HEK293 (cell line): ENCODE measurements at regions of chr6 and their contacts with region 1.

Region 1: DNA sequence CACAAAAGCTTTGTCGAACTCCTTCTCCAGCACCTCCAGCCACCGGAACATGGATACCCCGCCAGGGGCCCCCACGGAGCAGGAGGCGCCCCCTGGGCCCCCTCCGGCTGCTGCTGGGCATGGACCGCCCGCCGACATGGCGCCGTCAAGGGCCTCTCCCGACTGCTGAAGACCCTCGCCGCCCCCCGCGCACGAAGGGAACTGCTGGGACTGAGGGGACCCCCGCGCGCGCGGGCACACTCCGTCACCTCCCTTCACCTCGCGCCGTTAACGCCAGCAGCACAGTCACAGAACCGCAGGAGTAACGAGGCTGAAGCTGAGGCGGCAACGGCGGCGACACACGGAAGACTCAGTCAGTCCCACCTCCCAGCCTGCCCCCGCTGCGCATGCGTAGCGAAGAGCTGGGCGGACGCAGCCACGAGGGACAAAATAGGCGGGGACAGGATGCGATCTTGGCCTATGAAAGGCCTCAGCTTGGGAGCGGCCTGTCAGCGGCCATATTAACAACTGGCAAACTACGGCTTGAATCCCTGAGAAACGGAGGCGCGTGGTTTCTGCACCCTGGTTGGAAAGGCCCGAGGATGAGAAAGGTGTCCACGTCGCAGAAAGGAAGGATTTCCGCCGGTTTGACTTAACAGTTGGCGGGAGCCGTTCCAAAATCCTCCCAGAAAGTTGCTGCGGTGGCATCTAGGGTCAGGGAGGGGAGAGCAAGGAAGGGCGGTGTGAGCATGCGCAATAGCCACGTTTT is at the start of gene GOPC:
- H3K4me3 ChIP-seq: peak within 1 kb of the TSS; percentile 82
- H3K27ac ChIP-seq: peak within 1 kb of the TSS; percentile 75
- H3K4me1 ChIP-seq: no peaks in the 10 kb centered on the region
- CTCF ChIP-seq: peak; percentile 96

Region 2: DNA sequence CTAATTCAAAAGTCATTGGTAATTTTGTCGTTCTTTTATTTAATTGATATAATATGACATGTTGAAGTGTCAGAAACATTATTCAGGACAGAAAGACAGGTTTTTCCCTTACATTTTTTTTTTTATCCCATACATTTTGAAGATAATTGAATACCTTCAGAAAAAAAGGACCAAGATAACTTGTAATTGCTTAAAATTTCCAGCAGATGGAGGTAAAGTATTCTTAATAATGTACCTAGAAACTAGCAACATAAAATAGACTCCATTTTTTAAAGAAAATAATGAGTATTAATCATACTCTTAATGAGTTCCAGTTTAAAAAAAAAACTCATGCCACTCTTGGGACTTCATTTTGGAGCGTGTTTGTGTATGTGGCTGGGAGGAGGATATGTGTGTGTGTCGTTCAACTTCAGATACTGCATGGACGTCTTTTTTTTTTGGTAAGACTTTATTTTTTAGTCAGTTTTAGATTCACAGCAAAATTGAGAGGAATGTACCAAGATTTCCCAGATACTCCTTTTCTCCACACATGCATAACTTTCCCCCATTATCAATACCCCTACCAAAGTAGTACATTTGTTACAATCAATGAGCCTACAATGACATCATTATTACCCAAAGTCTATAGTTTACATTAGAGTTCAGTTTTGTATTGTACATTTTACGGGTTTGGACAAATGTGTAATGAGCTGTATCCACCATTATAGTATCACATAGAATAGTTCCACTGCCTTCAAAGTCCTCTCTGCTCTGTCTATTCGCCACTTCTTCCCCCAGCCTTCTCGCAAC is 256.0 kb before region 1 on chr6:
- CTCF ChIA-PET with region 1: interaction called, 27 read pairs
- POLR2A ChIA-PET with region 1: no interaction called
- H3K4me3 ChIP-seq: no peak overlapping the region
- H3K27ac ChIP-seq: no peak overlapping the region
- H3K4me1 ChIP-seq: no peaks in the 10 kb centered on the region
- CTCF ChIP-seq: no peak

Region 3: GRCh38 chr6:117449549-117450439 is 152.5 kb before region 1 on chr6:
- CTCF ChIA-PET with region 1: interaction called, 106 read pairs
- POLR2A ChIA-PET with region 1: interaction called, 15 read pairs
- H3K4me3 ChIP-seq: no peak overlapping the region; the same call in 1 of the 2 replicates
- H3K27ac ChIP-seq: no peak overlapping the region
- H3K4me1 ChIP-seq: no peaks in the 10 kb centered on the region; the same call in 1 of the 2 replicates
- CTCF ChIP-seq: peak; percentile 43; the same call in 1 of the 2 replicates

Region 4: DNA sequence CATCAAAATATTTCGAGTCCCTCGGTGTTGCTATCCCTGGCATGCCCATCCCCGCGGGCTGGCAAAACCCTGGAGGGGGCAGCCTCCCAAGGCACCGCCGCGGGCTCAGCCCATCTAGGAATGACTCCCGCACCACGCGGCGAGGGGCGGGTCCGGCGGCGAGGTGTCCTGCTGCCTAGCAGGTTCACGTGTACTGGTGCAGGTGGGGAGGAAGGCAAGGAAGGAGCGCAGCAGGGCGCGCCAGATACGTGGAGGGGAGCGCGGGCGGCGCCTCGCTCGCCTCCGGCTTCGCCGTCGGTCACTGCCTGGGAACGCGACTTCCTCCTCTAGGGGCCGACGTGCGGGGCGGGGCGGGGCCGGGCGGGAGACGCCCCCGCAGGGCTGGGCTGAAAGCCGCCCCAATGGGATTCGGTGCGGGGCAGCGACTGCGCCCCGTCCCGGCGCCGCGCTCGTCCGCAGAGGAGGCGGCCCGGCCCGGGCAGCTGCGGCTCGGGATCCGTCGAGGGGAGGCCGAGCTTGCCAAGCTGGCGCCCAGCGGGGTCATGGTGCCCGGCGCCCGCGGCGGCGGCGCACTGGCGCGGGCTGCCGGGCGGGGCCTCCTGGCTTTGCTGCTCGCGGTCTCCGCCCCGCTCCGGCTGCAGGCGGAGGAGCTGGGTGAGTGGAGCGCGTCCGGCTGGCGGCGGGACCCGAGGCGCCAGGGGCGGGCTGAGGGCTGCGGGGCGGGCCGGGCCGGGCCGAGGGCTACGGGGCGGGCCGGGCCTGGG is 119.9 kb before region 1 on chr6 and contains the start of gene DCBLD1:
- CTCF ChIA-PET with region 1: interaction called, 21 read pairs
- POLR2A ChIA-PET with region 1: interaction called, 22 read pairs
- H3K4me3 ChIP-seq: peak within 1 kb of the TSS; percentile 85
- H3K27ac ChIP-seq: peak within 1 kb of the TSS; percentile 73
- H3K4me1 ChIP-seq: no peaks in the 10 kb centered on the region
- CTCF ChIP-seq: peak; percentile 60

Region 5: GRCh38 chr6:117591405-117591804 is 10.9 kb before region 1 on chr6:
- CTCF ChIA-PET with region 1: interaction called, 10 read pairs
- POLR2A ChIA-PET with region 1: interaction called, 14 read pairs
- H3K4me3 ChIP-seq: no peak overlapping the region
- H3K27ac ChIP-seq: no peak overlapping the region
- H3K4me1 ChIP-seq: peaks cover 13% of the 10 kb centered on the region
- CTCF ChIP-seq: no peak